Activated T-helper 2 cell treated with anti-CD3 and anti-CD28 coated beads, Interferon-gamma antibody, Interleukin-2, Interleukin-4, amounts not matched to agents 10 μg/mL and 5 μg/mL and 100 μg/mL, durations not matched to agents 14 hours and 24 hours and 36 hours (primary cell): ENCODE measurements at regions of chr1 and their contacts with region 1.

Region 1: DNA sequence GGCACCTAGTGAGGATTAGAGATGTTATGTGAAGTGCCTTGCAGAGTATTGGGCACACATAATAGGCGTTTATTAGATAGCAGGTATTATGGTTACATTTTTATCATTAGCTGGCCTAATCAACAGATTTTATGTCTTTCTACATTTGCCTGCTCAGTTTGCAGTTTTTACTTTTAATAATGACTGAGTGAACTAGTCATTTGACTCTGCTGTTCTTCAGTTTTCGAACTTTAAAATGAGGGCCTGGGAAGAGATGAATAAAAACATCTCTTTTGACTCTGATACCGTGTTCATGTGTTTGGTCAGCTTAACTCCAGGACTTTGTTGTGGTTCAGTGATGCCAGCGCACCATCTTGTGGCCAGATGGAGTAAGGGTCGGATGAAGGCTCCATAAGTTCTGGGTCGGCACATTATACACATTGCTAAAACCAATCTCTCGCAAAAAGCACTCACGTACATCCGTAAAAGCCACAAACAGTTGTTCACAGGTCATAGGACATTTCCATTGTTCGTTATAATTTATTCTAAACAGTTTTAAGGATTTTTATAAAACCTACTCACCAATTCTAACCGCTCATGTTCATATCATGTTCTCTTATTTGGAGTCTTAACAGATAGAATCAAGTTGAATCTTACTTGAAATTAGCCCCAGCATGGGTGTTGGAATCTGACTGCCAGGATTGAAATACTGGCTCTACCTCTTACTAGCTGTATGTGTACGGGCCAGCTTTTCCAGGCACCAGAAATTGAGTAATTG is 78.4 kb upstream of the GPR88 start:
- DNase-seq: peak; percentile 58
- H3K4me3 Mint-ChIP-seq: no peak overlapping the region
- H3K27ac Mint-ChIP-seq: no peak overlapping the region
- H3K4me1 Mint-ChIP-seq: peaks cover 34% of the 10 kb centered on the region
- H3K27me3 Mint-ChIP-seq: no peaks in the 10 kb centered on the region

Region 2: DNA sequence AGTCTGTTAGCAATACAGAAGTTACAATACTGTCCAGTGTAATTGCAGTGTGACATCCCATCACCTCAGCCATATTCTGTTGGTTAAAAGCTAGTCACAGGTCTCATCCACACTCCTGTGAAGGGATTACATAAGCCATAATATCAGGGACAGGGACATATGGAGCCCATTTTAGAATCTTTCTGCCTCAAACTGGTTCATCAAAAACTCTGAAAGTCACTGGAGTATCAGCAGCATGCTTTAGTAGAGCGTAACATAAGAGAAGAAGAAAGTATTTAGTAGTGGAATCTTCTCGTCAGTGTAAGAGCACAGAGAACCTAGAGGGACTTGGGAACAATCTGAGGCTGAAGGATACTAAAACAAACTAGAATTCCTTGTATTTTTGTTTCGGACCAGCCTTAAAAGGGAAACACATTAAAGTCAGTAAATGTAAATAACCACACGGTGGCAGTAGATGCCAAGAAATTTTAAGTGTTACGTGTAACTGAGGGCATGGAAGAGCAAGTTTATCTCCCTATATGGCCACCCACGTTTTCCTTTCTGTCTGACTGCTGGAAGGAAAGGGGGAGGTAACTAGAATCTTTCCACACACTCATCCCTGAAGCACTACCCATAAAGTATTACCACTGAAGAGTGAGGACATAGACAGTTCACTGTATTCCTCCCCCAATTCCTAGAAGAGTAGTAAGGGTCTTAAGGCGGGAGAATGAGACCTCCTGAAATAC is 651.0 kb before region 1 on chr1:
- intact Hi-C with region 1: loop called (anchors 1 kb)
- DNase-seq: no peak
- H3K4me3 Mint-ChIP-seq: no peak overlapping the region
- H3K27ac Mint-ChIP-seq: peak overlapping the region; percentile 47
- H3K4me1 Mint-ChIP-seq: peaks cover 17% of the 10 kb centered on the region
- H3K27me3 Mint-ChIP-seq: peaks cover 17% of the 10 kb centered on the region

Region 3: DNA sequence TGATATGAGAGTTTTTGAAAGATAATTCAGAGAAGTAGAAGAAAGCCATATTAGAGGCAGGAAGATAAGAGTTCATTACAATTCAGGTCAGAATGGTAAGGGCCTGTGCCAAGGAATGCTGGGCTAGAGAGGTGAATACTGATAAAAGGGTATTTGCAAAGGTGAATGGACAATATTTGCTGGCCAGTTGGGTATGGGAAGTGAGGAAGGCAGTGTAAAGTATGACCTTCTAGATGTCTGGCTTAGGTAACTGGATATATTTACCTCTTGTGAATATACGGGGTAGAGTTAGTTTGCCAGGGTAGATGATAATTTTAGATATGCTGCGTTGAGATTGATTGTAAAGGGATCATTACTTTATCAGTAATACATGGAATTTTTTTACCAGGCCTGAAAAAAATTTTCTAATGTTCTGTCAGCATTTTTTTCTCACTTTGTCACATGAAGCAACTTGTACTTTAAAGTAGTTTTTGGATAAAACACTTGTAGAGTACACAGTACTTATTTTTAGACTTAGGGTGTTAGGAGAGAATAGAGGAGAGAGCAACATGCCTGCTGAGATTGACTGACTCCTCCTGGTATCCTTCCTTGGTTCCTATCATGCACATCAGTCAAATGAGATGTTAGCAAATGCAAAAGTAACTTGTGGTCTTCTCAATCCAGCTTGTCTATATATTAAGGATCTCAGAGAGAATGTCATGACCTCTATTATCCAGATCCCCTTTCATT is 179.4 kb before region 1 on chr1:
- intact Hi-C with region 1: loop called (anchors 5 kb)
- DNase-seq: no peak
- H3K4me3 Mint-ChIP-seq: no peak overlapping the region
- H3K27ac Mint-ChIP-seq: peak overlapping the region; percentile 10
- H3K4me1 Mint-ChIP-seq: peaks cover 11% of the 10 kb centered on the region
- H3K27me3 Mint-ChIP-seq: no peaks in the 10 kb centered on the region

Region 4: DNA sequence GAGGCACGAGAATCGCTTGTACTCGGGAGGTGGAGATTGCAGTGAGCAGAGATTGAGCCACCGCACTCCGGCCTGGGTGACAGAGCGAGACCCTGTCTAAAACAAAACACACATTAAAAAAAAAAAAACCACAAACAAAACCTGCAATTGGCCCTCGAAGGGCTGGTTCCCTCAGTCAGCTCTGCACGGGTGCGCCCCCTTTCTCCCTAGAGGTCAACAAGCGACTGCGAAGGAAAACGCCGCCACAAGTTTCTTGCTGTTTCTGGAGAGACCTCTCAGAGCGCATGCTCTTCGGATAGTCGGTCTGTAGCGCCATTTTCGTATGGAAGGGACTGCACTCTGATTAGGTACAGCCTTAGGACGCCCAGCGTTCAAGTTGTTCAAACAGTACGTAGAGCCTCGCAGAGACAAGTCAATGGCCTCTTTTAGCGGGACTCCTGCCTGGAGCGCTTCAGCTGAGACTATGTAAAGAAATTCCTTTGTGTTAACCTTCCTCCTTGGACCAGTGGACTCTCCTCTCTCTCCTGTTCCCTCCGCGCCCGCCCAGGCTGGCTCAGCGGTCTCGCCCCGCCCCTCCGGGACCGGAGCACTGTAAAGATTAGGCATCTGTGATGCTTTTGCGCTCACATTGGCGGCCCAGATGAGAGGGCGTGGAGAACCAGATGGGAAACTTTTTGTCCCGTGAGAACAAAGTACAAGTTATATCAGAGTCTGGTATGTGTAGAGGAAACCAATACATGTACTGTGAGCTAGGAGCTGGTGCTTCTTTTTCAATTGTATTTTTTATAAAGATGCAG is 108.2 kb before region 1 on chr1:
- intact Hi-C with region 1: loop called (anchors 2 kb)
- DNase-seq: peak; percentile 84
- H3K4me3 Mint-ChIP-seq: peak overlapping the region; percentile 87
- H3K27ac Mint-ChIP-seq: peak overlapping the region; percentile 89
- H3K4me1 Mint-ChIP-seq: peaks cover 35% of the 10 kb centered on the region
- H3K27me3 Mint-ChIP-seq: peaks cover 4% of the 10 kb centered on the region

Region 5: GRCh38 chr1:100499194-100499811 is 39.8 kb after region 1 on chr1:
- intact Hi-C with region 1: no loop called
- DNase-seq: no peak
- H3K4me3 Mint-ChIP-seq: no peak overlapping the region
- H3K27ac Mint-ChIP-seq: no peak overlapping the region
- H3K4me1 Mint-ChIP-seq: no peaks in the 10 kb centered on the region
- H3K27me3 Mint-ChIP-seq: no peaks in the 10 kb centered on the region

Region 6: DNA sequence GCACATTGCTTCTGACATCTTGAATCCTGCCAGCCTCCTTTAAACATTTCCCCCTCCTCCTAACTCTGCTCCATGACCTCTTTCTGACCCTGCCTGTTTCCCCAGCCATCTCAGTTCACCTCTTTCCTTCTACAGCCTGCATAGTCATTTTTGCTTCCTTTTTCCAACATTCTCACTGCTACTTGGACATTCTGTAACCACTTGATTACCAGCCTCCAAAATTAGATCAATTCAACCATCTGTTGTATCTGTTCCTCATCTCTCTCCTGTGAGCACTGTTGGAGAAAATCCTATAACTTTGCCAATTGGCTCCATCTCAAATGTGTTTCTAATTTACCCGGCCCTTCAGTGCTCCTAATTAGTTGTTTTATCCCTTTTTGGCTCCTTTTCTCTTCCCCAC is 50.9 kb after region 1 on chr1:
- intact Hi-C with region 1: no loop called
- DNase-seq: no peak
- H3K4me3 Mint-ChIP-seq: no peak overlapping the region
- H3K27ac Mint-ChIP-seq: no peak overlapping the region
- H3K4me1 Mint-ChIP-seq: no peaks in the 10 kb centered on the region
- H3K27me3 Mint-ChIP-seq: no peaks in the 10 kb centered on the region

Region 7: DNA sequence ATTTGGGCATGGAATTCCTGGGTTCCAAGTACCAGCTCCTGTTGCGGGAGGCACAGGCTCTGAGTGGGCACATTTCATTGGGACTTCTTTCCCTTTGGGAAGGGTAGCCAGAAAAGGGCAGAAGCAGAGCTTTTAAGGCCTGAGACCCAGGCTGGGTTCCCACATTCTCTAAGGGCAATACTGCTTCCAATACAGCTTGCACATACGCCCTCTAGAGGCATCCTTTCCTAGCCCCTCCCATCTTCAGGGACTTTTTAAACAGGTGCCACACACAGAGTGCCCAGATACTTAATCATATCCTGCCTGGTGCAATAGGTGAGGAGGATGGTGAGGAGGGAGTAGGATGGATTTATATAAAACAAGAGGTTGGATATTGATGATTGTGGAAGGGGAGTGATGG is 84.1 kb after region 1 on chr1:
- intact Hi-C with region 1: loop called (anchors 5 kb)
- DNase-seq: no peak
- H3K4me3 Mint-ChIP-seq: no peak overlapping the region
- H3K27ac Mint-ChIP-seq: no peak overlapping the region
- H3K4me1 Mint-ChIP-seq: no peaks in the 10 kb centered on the region
- H3K27me3 Mint-ChIP-seq: peaks cover 45% of the 10 kb centered on the region

Region 8: DNA sequence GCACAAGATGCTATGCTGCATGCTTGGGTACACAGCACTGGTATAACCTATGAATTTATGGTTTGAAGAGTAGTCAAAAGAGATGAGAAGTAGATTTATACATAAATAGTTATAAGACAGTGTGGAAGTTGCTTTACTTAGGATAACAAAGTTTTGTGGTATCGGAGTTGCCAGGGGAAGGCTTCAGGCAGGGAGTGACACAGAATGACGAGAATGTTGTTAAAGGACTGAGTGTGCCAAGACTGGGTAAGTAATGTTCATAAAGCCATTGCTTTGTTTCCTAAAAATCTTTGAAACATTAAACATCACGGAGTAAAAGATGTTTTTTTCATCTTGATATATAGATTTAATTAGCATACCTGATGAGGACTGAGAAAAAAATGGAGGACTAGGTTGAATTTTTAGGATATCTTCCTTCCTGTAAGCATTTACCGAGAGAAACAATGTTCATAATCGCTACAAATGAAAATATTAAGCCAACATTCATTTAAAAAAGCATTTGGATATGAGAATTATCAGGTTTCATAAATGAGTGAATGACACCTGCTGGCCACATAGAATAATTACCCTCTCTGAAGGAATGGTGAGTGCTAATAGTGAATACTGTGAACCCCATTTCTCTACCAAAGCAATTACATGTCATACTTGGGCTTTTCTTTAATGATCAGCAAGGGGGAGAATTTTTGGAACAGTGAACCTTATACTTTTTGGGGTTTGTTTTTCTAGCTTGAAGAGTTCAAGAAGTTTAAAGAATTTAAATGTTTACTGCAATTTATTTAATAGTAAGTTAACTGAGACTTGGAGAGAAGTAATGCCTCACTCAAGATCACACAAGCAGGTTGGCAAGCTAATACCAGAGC is 406.7 kb after region 1 on chr1:
- intact Hi-C with region 1: loop called (anchors 1 kb)
- DNase-seq: no peak
- H3K4me3 Mint-ChIP-seq: no peak overlapping the region
- H3K27ac Mint-ChIP-seq: no peak overlapping the region
- H3K4me1 Mint-ChIP-seq: no peaks in the 10 kb centered on the region
- H3K27me3 Mint-ChIP-seq: peaks cover 4% of the 10 kb centered on the region

Region 9: DNA sequence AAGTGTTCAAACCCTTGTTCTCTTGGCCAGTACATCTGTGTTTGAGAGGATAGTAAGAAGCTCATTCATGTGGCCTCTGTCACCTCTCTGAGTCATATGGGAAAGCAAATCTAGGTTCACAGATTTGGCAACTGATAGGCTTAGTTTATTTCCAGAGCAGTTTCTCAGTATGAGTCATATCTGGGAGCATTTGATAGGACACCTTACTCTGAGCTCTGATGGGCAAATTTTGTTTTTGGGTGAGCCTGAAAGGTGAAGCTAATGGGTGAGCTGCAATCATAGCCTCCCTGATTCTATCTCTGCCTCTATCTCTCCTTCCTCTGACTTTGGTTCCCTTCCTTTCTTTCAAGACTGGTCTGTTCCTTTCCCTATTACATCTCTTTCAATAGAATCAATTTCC is 911.7 kb after region 1 on chr1:
- intact Hi-C with region 1: loop called (anchors 10 kb)
- DNase-seq: peak; percentile 31
- H3K4me3 Mint-ChIP-seq: peak overlapping the region; percentile 10
- H3K27ac Mint-ChIP-seq: no peak overlapping the region
- H3K4me1 Mint-ChIP-seq: peaks cover 17% of the 10 kb centered on the region
- H3K27me3 Mint-ChIP-seq: peaks cover 44% of the 10 kb centered on the region